B cell (primary cell): ENCODE measurements at regions of chr19 and their contacts with region 1.

Region 1: DNA sequence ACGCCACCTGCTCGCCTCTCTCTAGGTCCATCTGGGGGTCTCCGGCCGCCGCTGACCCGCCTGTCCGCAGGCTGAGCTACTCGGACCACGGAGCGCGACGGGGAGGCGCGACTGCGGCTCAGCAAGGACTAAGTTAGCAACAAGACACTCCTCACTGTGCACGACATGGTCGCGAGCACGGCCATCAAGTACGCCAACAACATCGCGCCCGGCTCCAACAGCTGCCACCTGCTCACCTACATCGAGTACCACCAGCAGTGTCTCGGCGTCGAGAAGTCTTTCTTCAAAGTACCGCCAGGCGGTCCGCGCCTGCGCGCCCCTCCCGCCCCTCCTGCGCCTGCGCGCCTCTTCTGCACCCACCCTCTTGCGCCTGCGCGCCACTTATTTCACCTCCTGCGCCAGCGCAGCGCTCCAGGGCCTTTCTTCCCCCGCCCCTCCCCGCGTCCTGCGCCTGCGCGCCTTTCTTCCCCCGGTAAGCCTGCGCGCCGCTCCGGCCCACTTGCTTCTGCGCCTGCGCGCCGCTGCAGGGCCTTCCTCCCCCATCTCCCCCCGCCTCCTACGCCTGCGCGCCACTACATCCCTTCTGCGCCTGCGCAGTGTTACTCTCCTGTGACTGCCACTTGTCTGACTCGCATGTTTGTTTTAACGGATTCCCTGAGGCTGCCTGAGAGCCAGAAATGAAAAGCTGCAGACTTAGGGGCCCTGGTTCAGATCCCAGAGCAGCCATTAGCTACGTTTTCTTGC is 63.9 kb downstream of the ACSBG2 start:
- DNase-seq: peak; percentile 100
- ATAC-seq: peak; percentile 88
- H3K4me3 ChIP-seq: peak overlapping the region; percentile 32 to 88 (median 72)
- H3K4me3 Mint-ChIP-seq: peak overlapping the region; percentile 99
- H3K27ac ChIP-seq: peak overlapping the region; percentile 56 to 60
- H3K27ac Mint-ChIP-seq: peak overlapping the region; percentile 89
- H3K4me1 ChIP-seq: peaks cover 17 to 34% of the 10 kb centered on the region in 2 donors
- H3K4me1 Mint-ChIP-seq: peaks cover 32% of the 10 kb centered on the region
- H3K27me3 ChIP-seq: no peaks in the 10 kb centered on the region
- H3K27me3 Mint-ChIP-seq: no peaks in the 10 kb centered on the region
- CTCF ChIP-seq: peak; percentile 57

Region 2: GRCh38 chr19:6110360-6110977 is 88.9 kb before region 1 on chr19 and contains the start of gene RFX2:
- CTCF ChIA-PET with region 1: no interaction called
- POLR2A ChIA-PET with region 1: no interaction called
- intact Hi-C with region 1: loop called (anchors 1 kb)
- DNase-seq: peak; percentile 99
- ATAC-seq: peak; percentile 98
- H3K4me3 ChIP-seq: peak within 1 kb of the TSS; percentile 51 to 74 (median 54)
- H3K4me3 Mint-ChIP-seq: peak within 1 kb of the TSS; percentile 88
- H3K27ac ChIP-seq: peak within 1 kb of the TSS; percentile 30 to 38
- H3K27ac Mint-ChIP-seq: peak within 1 kb of the TSS; percentile 81
- H3K4me1 ChIP-seq: peaks cover 21 to 23% of the 10 kb centered on the region in 2 donors
- H3K4me1 Mint-ChIP-seq: peaks cover 21% of the 10 kb centered on the region
- H3K27me3 ChIP-seq: peaks cover 0 to 34% (median 12%) of the 10 kb centered on the region in 4 experiments
- H3K27me3 Mint-ChIP-seq: peaks cover 21% of the 10 kb centered on the region
- CTCF ChIP-seq: no peak
- total RNA-seq, gene RFX2: 6.5 and 8.6 TPM in 2 replicates

Region 3: GRCh38 chr19:6218491-6219162 is 19.2 kb after region 1 on chr19:
- CTCF ChIA-PET with region 1: interaction called, 11 read pairs
- POLR2A ChIA-PET with region 1: no interaction called
- intact Hi-C with region 1: no loop called
- DNase-seq: peak; percentile 82
- ATAC-seq: peak; percentile 79
- H3K4me3 ChIP-seq: no peak overlapping the region
- H3K4me3 Mint-ChIP-seq: no peak overlapping the region
- H3K27ac ChIP-seq: no peak overlapping the region
- H3K27ac Mint-ChIP-seq: no peak overlapping the region
- H3K4me1 ChIP-seq: peaks cover 0 to 6% of the 10 kb centered on the region in 2 donors
- H3K4me1 Mint-ChIP-seq: peaks cover 3% of the 10 kb centered on the region
- H3K27me3 ChIP-seq: no peaks in the 10 kb centered on the region
- H3K27me3 Mint-ChIP-seq: no peaks in the 10 kb centered on the region
- CTCF ChIP-seq: peak; percentile 92

Region 4: DNA sequence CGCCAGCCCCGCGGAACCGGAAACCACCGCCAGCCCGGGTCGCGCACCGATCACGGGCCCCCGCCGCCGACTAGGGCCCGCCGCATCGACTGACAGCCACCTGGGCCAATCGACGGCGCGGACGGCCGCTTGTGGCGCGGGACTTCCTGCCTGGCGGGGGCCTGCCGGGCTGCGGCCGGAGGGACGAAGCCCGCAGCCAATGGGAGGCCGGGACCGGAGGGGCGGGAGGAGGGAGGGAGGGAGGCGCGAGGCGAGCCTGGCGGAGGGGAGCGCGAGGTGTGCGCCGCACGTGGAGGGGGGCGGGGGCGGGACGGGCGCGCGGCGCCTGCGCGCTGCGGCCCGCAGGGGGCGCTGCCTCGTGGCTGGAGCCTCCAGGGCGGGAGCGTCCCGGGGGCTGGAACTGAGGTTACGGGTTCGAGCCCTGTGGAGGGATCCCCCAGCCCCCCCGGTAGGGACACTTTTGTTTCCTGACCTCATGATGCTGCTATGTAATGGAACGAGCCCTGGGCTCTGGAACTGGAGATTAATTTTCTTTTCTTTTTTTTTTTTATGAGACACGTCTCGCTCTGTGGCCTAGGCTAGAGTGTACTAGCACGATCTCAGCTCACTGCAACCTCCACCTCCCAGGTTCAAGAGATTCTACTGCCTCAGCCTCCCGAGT is 80.6 kb after region 1 on chr19 and contains the start of gene MLLT1:
- CTCF ChIA-PET with region 1: interaction called, 3 read pairs
- POLR2A ChIA-PET with region 1: no interaction called
- intact Hi-C with region 1: loop called (anchors 1 kb)
- DNase-seq: peak; percentile 97
- ATAC-seq: peak; percentile 97
- H3K4me3 ChIP-seq: peak within 1 kb of the TSS; percentile 44 to 85 (median 62)
- H3K4me3 Mint-ChIP-seq: peak within 1 kb of the TSS; percentile 89
- H3K27ac ChIP-seq: peak within 1 kb of the TSS; percentile 29 to 77
- H3K27ac Mint-ChIP-seq: peak within 1 kb of the TSS; percentile 64
- H3K4me1 ChIP-seq: peaks cover 15 to 23% of the 10 kb centered on the region in 2 donors
- H3K4me1 Mint-ChIP-seq: peaks cover 27% of the 10 kb centered on the region
- H3K27me3 ChIP-seq: no peaks in the 10 kb centered on the region
- H3K27me3 Mint-ChIP-seq: no peaks in the 10 kb centered on the region
- CTCF ChIP-seq: peak; percentile 90
- total RNA-seq, gene MLLT1: 40.2 and 45.7 TPM in 2 replicates

Region 5: DNA sequence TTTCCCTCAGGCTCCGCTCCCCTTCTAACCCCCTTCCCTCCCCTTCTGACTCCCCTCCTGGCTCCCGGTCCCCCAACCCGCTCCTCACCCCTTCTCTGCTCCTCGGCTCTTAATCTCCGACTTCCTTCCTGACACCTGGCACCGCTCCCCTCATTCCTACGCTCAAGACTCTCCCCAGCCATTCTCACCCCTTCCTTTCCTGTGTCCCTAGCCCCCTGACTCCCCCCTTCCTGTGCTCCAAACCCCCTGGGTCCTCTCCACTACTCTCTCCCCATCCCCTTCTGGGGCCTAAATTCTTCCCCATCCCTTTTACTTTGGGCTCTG is 162.6 kb after region 1 on chr19:
- CTCF ChIA-PET with region 1: no interaction called
- POLR2A ChIA-PET with region 1: no interaction called
- intact Hi-C with region 1: loop called (anchors 1 kb)
- DNase-seq: no peak
- ATAC-seq: no peak
- H3K4me3 ChIP-seq: peak overlapping the region in 4 of 5 experiments; percentile 60 to 72 (median 66)
- H3K4me3 Mint-ChIP-seq: peak overlapping the region; percentile 94
- H3K27ac ChIP-seq: peak overlapping the region; percentile 60 to 79
- H3K27ac Mint-ChIP-seq: peak overlapping the region; percentile 92
- H3K4me1 ChIP-seq: peaks cover 6 to 12% of the 10 kb centered on the region in 2 donors
- H3K4me1 Mint-ChIP-seq: peaks cover 14% of the 10 kb centered on the region
- H3K27me3 ChIP-seq: no peaks in the 10 kb centered on the region
- H3K27me3 Mint-ChIP-seq: no peaks in the 10 kb centered on the region
- CTCF ChIP-seq: no peak

Region 6: DNA sequence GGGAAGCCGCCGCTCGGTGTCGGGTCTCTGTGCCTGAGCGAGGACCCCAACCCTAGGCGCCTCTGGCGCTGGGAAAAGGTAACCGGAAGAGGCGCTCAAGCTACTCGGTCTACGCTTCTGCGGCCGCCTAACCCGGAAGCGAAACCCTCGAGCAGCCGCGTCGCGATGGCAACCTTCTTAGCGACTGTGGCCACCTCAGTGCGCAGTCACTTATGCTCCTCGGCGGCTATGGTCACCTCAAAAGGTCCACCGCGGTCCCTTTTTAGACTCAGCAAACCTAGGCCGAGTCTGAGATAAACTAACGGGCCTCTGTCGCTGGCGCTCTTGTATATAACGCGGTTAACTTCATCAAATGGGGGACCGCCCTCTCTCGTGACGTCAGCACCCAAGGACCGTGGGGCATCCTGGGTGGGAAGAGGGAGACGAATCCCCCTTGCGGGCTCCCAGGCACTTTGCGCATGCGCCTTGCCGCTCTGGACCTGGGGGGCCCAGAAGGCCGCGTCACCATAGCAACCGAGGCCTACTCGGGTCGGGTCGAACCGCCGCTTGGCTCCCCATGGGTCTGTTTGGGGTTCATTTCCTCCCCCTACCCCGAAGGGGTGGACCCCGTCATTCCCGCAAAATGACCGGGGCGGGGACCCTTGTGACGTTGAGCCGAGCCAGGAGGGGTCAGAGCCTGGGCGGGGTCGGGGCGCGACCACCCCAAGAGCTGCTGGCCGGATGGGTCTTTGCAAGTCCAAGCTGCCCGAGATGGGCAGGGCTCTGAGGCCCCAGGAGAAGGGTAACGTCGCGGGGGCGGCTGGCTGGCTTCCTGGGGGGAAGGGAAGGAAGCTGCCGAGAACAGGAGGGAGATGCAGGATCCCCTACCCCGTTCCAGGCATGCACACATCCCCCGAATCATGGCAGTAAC is 193.9 kb after region 1 on chr19 and contains the start of gene GTF2F1:
- CTCF ChIA-PET with region 1: no interaction called
- POLR2A ChIA-PET with region 1: no interaction called
- intact Hi-C with region 1: loop called (anchors 1 kb)
- DNase-seq: peak; percentile 98
- ATAC-seq: peak; percentile 82
- H3K4me3 ChIP-seq: peak within 1 kb of the TSS; percentile 70 to 91 (median 83)
- H3K4me3 Mint-ChIP-seq: peak within 1 kb of the TSS; percentile 95
- H3K27ac ChIP-seq: peak within 1 kb of the TSS; percentile 73 to 95
- H3K27ac Mint-ChIP-seq: peak within 1 kb of the TSS; percentile 97
- H3K4me1 ChIP-seq: peaks cover 15 to 16% of the 10 kb centered on the region in 2 donors
- H3K4me1 Mint-ChIP-seq: peaks cover 26% of the 10 kb centered on the region
- H3K27me3 ChIP-seq: no peaks in the 10 kb centered on the region
- H3K27me3 Mint-ChIP-seq: no peaks in the 10 kb centered on the region
- CTCF ChIP-seq: no peak
- total RNA-seq, gene GTF2F1: 56.5 and 63.4 TPM in 2 replicates